H1 (cell line): ENCODE measurements at regions of chr19 and their contacts with region 1.

Region 1: DNA sequence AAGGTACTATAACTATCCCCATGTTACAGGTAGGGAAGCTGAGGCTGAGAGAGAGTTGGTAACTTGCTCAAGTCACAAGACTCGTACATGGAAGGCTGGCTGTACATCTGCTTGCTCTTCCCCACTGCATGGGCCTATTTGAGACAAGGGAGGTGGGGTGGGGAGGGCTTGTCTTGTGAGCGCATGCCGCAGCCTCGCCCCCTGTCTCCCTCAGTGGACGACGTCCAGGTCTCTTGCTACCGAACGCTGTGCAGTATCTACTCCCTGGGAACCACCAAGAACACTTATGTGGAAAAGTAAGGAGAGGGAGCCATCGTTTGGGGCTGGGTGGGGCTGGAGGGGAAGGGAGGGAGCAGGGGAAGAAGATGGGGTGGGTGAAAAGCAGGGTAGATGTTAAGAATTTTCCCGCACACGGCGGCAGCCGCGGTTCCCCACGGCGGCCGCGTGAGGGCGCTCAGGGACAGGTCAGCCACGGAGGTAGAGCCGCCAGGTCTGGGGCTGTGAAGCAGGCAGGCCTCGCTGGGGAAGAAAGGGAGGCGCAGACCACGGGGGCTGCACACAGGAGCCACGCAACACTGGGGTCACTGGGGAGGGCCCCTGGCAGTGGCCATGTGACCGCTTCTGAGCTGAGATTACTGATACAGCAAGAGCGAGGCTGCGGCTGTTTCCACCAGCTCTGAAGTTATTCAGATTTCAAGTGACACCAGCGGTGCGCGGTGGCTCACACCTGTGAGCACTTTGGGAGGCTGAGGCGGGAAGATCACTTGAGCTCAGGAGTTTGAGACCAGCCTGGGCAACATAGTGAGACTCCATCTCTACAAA is 81.5 kb downstream of the RYR1 start:
- DNase-seq: peak; percentile 44 to 95
- H3K4me3 ChIP-seq: no peak overlapping the region
- H3K27ac ChIP-seq: no peak overlapping the region
- H3K4me1 ChIP-seq: no peaks in the 10 kb centered on the region
- H3K27me3 ChIP-seq: no peaks in the 10 kb centered on the region
- CTCF ChIP-seq: peak; percentile 83 to 85 (median 85)
- EP300 ChIP-seq: no peak; a peak in 1 of 3 replicates
- POLR2A ChIP-seq: no peak
- RAD21 ChIP-seq: peak; percentile 83 to 84

Region 2: GRCh38 chr19:38417544-38418506 is 97.2 kb before region 1 on chr19:
- CTCF ChIA-PET with region 1: no interaction called
- POLR2A ChIA-PET with region 1: no interaction called
- DNase-seq: peak in 1 of 2 experiments; percentile 95
- H3K4me3 ChIP-seq: peak overlapping the region; percentile 44 to 68 (median 58)
- H3K27ac ChIP-seq: no peak overlapping the region
- H3K4me1 ChIP-seq: peaks cover 0 to 12% (median 8%) of the 10 kb centered on the region in 4 experiments; a peak in 5 of 7 replicates
- H3K27me3 ChIP-seq: peaks cover 0 to 9% (median 5%) of the 10 kb centered on the region in 4 experiments; a peak in 5 of 7 replicates
- CTCF ChIP-seq: no peak
- EP300 ChIP-seq: no peak
- POLR2A ChIP-seq: no peak
- RAD21 ChIP-seq: no peak

Region 3: DNA sequence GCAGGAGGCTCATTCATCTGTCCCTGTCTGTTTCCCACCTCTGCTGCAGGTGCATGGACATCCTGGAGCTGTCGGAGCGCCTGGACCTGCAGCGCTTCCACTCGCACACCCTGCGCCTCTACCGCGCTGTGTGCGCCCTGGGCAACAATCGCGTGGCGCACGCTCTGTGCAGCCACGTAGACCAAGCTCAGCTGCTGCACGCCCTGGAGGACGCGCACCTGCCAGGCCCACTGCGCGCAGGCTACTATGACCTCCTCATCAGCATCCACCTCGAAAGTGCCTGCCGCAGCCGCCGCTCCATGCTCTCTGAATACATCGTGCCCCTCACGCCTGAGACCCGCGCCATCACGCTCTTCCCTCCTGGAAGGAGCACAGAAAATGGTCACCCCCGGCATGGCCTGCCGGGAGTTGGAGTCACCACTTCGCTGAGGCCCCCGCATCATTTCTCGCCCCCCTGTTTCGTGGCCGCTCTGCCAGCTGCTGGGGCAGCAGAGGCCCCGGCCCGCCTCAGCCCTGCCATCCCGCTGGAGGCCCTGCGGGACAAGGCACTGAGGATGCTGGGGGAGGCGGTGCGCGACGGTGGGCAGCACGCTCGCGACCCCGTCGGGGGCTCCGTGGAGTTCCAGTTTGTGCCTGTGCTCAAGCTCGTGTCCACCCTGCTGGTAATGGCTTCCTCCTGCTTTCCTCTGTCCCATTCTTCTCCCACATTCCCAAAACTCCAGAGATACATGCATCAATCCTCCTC is 29.3 kb before region 1 on chr19:
- CTCF ChIA-PET with region 1: no interaction called
- POLR2A ChIA-PET with region 1: no interaction called
- DNase-seq: no peak
- H3K4me3 ChIP-seq: no peak overlapping the region
- H3K27ac ChIP-seq: no peak overlapping the region
- H3K4me1 ChIP-seq: no peaks in the 10 kb centered on the region
- H3K27me3 ChIP-seq: no peaks in the 10 kb centered on the region
- CTCF ChIP-seq: no peak
- EP300 ChIP-seq: no peak
- POLR2A ChIP-seq: no peak
- RAD21 ChIP-seq: no peak

Region 4: DNA sequence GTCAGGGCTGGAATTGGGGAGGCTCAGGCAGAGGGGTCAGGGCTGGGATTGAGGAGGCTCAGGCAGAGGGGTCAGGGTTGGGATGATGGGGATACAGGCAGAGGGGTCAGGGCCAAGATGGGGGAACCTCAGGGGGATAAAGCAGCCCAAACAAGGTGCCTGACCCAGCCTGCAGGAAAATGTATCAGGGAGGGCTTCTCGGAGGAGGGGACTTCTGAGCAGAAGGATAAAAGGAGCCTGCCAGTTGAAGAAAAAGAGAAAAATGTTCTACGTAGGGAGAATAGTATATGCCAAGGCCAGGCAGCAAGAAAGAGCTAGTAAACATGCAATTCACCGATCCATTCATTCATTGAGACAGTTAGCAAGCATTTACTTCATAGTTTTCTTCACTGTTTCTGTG is 17.9 kb after region 1 on chr19:
- CTCF ChIA-PET with region 1: interaction called, 10 read pairs
- POLR2A ChIA-PET with region 1: interaction called, 3 read pairs
- DNase-seq: no peak
- H3K4me3 ChIP-seq: no peak overlapping the region
- H3K27ac ChIP-seq: no peak overlapping the region
- H3K4me1 ChIP-seq: no peaks in the 10 kb centered on the region
- H3K27me3 ChIP-seq: no peaks in the 10 kb centered on the region
- CTCF ChIP-seq: no peak
- EP300 ChIP-seq: no peak
- POLR2A ChIP-seq: no peak
- RAD21 ChIP-seq: no peak